Activated naive CD4-positive, alpha-beta T cell treated with anti-CD3 and anti-CD28 coated beads, Interleukin-2, amount 10 ng/mL, durations not matched to agents 7 days and 5 days (primary cell): ENCODE measurements at regions of chr17 and their contacts with region 1.

Region 1: GRCh38 chr17:50626037-50626574 is 8.6 kb upstream of the ABCC3 start:
- DNase-seq: peak; percentile 79
- H3K4me3 Mint-ChIP-seq: no peak overlapping the region
- H3K27ac Mint-ChIP-seq: no peak overlapping the region
- H3K4me1 Mint-ChIP-seq: peaks cover 6% of the 10 kb centered on the region
- H3K27me3 Mint-ChIP-seq: peaks cover 92% of the 10 kb centered on the region

Region 2: DNA sequence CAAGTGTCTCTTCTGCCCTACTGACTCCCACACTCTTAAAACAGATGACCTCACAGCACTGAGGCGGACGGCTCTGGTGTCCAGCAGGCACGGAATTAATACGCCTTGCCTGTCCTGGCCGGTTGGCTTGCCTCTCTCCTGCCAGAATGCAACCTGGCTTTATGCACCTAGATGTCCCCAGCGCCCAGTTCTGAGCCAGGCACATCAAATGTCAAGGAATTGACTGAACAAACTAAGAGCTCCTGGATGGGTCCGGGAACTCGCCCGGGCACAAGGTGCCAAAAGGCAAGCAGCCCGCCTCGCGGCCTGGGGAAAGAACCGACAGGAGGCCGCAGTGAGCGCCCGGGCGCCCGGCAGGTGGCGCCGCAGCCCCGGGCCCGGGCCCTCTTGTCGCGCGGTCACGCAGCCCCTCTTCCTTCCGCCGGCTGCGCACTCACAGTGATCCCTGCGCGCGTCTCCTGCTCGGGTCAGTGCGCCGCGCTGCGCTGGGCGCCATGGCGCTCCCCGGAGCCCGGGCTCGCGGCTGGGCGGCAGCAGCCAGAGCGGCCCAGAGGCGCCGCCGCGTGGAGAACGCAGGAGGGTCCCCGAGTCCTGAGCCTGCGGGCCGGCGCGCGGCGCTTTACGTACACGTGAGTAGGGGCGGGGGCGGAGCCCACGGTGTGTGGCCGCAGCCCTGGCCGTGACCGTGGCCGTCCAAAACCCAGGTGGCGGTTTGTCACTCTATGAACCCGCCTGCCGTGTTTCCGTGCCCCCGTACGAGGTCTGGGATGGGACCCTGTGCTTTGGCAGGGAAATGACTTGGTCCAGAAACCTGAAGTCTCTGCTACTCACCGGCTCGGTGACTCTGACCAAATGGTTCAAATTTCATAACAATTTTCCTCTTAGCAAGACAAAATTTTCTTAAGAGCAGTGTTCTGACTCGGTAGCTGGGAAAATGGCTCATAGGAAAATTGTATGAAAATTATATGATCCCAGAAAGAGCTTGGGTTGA is 147.4 kb before region 1 on chr17 and contains the start of gene RSAD1:
- CTCF ChIA-PET with region 1: interaction called, 48 read pairs
- DNase-seq: peak; percentile 91
- H3K4me3 Mint-ChIP-seq: peak within 1 kb of the TSS; percentile 84
- H3K27ac Mint-ChIP-seq: peak within 1 kb of the TSS; percentile 87
- H3K4me1 Mint-ChIP-seq: peaks cover 21% of the 10 kb centered on the region
- H3K27me3 Mint-ChIP-seq: peaks cover 12% of the 10 kb centered on the region

Region 3: DNA sequence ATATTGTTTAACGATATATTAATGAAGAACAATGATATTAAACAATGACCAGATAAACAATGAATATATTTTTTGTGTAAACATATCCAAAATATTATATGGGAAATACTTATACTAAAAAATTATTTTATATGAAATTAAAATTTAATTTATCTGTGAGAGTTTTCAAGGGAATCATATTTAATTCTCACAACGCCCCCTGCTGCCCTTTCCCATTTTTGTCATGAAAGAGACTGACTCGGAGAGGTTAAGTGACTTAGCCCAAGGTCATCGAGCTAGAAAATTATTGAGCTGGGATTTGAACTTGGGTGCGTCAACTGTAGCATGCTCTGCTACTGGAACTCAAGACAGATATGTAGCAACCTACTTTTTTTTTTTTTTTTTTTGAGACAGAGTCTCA is 125.1 kb before region 1 on chr17:
- CTCF ChIA-PET with region 1: no interaction called
- DNase-seq: peak; percentile 54
- H3K4me3 Mint-ChIP-seq: no peak overlapping the region
- H3K27ac Mint-ChIP-seq: no peak overlapping the region
- H3K4me1 Mint-ChIP-seq: peaks cover 40% of the 10 kb centered on the region
- H3K27me3 Mint-ChIP-seq: peaks cover 39% of the 10 kb centered on the region

Region 4: DNA sequence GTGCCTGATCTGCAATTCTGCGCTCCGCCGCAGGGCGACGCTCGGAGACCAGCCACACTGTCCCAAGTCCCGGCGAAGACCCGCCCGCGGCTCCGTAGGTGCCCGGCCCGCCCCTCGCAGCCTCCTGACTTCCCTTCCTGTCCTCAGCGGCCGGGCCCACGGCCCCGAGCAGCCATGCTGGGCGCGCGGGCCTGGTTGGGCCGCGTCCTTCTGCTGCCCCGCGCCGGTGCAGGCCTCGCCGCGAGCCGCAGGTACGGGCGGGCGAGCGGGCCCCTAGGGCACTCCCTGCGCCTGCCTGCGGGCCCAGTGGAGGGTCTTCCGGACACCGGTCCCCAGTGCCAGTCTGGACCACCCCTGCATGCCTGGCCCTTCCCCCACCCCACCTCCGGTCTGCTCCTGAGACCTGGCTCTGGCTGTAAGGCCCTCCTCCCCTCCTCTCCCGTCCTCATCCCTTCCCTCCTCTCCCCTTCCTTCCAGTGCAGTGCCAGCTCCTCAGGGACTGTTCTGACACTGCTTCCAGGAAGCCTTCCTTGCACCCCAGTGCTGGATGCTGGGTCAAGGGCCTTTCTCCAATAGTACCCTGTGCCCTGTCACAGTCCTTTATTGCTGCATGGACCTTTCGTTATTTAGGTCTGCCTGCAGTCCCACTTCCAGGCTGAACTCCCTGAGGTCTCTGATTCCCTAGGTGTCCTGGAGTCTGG is 78.9 kb before region 1 on chr17 and contains the start of gene SPATA20:
- CTCF ChIA-PET with region 1: interaction called, 25 read pairs
- DNase-seq: peak; percentile 93
- H3K4me3 Mint-ChIP-seq: peak within 1 kb of the TSS; percentile 73
- H3K27ac Mint-ChIP-seq: peak within 1 kb of the TSS; percentile 63
- H3K4me1 Mint-ChIP-seq: peaks cover 22% of the 10 kb centered on the region
- H3K27me3 Mint-ChIP-seq: peaks cover 33% of the 10 kb centered on the region

Region 5: DNA sequence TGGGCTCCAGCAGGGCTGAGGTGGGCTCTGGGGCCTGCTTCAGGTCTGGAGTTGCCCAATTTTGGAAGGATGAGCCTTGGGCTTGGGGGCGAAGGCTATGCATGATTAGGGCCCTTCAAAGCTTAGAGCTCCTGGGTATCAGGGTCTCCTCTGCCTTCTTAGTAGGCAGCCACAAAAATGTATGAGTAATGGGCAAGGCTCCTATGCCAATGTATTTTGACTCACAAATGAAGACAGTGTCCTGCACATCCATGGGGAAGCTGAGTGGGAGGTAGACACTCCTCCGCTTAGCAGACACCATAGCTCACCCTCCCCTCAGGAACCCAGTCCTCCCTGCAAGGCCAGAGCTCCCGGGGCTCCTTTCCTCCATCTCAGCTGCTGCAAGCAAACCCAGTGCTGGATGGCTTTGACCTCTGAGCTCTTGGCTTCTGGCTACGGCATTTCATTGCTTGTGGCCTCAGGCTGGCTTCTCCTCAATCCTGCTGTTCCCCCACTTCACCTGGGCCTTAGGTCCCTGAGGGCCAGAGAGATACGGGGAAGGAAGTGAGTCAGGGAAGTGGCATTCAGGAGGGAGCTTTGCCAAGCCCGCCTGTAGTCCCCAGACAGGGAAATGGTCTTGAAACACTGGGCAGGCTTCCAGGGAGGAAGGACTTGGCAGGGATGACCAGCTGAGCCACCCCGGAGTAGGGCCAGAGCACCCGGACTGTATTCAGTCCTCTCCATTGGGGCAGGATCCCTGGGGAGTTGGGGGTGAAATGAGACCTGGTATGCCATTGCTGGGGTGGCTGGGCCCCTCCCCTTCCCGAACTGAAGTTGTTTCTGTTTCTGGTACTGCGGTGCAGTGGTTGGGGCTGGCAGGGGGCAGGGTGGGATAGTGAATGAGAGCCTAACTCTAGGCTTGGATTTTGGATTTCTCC is 13.0 kb after region 1 on chr17:
- CTCF ChIA-PET with region 1: interaction called, 27 read pairs
- DNase-seq: peak; percentile 19
- H3K4me3 Mint-ChIP-seq: no peak overlapping the region
- H3K27ac Mint-ChIP-seq: no peak overlapping the region
- H3K4me1 Mint-ChIP-seq: no peaks in the 10 kb centered on the region
- H3K27me3 Mint-ChIP-seq: peaks cover 84% of the 10 kb centered on the region

Region 6: DNA sequence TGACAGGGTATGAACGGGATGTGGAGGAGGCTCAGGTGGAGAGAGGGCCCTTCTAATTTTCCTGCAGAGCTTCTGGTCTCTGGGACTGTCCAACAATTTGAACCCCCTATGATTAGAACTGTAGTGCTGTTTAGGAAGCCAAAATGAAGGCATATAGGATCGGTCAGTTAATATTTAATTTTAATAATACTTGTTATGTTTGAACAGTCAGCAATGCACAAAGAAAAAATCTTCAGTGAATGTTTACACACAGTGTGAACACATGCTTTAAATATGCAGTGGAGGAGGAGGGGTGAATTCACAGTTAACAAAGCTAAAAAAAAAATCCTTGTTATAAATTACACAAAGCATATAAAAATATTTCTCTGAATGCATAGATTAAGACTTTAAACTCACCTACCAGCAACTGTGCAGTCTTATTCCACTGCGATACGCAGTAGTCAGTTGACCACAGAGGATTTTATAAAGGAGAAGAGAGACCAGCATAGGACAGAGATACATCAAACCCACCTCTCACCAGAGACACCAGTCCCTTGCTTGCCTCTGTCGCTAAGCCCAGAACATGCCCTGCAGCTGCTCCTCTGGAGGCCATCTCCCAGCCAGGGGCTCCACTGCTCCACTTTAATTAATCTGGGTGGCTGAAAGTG is 67.1 kb after region 1 on chr17:
- CTCF ChIA-PET with region 1: interaction called, 81 read pairs
- DNase-seq: no peak
- H3K4me3 Mint-ChIP-seq: no peak overlapping the region
- H3K27ac Mint-ChIP-seq: no peak overlapping the region
- H3K4me1 Mint-ChIP-seq: peaks cover 16% of the 10 kb centered on the region
- H3K27me3 Mint-ChIP-seq: peaks cover 4% of the 10 kb centered on the region